Caco-2 (cell line): ENCODE measurements at regions of chr4 and their contacts with region 1.

Region 1: GRCh38 chr4:101921329-101921728 is 130.8 kb downstream of the BANK1 start:
- DNase-seq: no peak
- H3K4me3 ChIP-seq: no peak overlapping the region
- H3K4me3 Mint-ChIP-seq: no peak overlapping the region
- H3K27ac Mint-ChIP-seq: no peak overlapping the region
- H3K4me1 ChIP-seq: peaks cover 13% of the 10 kb centered on the region
- H3K4me1 Mint-ChIP-seq: no peaks in the 10 kb centered on the region
- H3K27me3 ChIP-seq: no peaks in the 10 kb centered on the region
- H3K27me3 Mint-ChIP-seq: no peaks in the 10 kb centered on the region
- CTCF ChIP-seq: no peak

Region 2: GRCh38 chr4:101910786-101911373 is 10.4 kb before region 1 on chr4:
- CTCF ChIA-PET with region 1: no interaction called
- POLR2A ChIA-PET with region 1: no interaction called
- intact Hi-C with region 1: loop called (anchors 2 kb)
- DNase-seq: no peak
- H3K4me3 ChIP-seq: no peak overlapping the region
- H3K4me3 Mint-ChIP-seq: no peak overlapping the region
- H3K27ac Mint-ChIP-seq: no peak overlapping the region
- H3K4me1 ChIP-seq: no peaks in the 10 kb centered on the region
- H3K4me1 Mint-ChIP-seq: no peaks in the 10 kb centered on the region
- H3K27me3 ChIP-seq: no peaks in the 10 kb centered on the region
- H3K27me3 Mint-ChIP-seq: no peaks in the 10 kb centered on the region
- CTCF ChIP-seq: no peak